ENCODE measurements at regions of chr2 and their contacts with region 1.

Region 1: GRCh38 chr2:139790807-139791752 is 1010.9 kb upstream of the NXPH2 start:
- DNase-seq: peak; percentile 69
- ATAC-seq: peak; percentile 87
- H3K4me3 ChIP-seq: no peak overlapping the region
- H3K27ac ChIP-seq: no peak overlapping the region
- H3K4me1 ChIP-seq: no peaks in the 10 kb centered on the region
- H3K27me3 ChIP-seq: no peaks in the 10 kb centered on the region
- CTCF ChIP-seq: peak; percentile 73

Region 2: DNA sequence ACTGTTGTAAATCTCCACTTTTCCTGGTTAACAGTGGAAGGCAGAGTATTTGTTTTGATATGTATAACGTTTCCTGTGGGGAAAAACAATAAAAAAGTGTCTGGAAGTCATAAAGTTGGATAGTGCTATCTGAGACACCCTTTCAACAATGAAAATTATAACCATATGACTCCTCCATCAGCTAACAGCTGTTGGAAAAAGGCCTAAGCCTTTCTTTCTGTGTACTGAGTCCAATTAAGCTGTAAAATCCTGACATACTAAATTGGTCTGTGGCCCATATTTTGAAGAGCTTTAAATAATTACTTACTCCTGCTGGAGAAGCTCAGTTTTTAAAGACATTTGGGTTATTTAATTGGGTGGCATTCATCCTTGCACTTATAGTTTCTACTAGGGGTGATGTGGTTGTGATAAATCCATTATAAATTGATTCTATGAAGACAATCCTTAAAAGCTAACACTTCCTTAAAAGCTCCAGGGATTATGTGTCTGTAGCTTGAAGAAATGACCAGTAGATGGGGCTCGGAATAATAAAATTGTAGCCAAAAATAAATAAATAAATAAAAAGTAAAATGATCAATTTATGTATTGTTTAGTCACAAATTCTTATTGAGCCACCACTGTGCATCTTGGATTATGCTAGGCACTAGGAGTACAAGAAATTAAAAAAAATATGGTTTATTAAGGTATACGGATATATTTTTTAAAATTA is 312.7 kb before region 1 on chr2:
- CTCF ChIA-PET with region 1: no interaction called
- POLR2A ChIA-PET with region 1: no interaction called
- intact Hi-C with region 1: loop called (anchors 5 kb)
- DNase-seq: peak; percentile 37
- ATAC-seq: peak; percentile 50
- H3K4me3 ChIP-seq: no peak overlapping the region
- H3K27ac ChIP-seq: no peak overlapping the region
- H3K4me1 ChIP-seq: no peaks in the 10 kb centered on the region
- H3K27me3 ChIP-seq: no peaks in the 10 kb centered on the region
- CTCF ChIP-seq: peak; percentile 58

Region 3: DNA sequence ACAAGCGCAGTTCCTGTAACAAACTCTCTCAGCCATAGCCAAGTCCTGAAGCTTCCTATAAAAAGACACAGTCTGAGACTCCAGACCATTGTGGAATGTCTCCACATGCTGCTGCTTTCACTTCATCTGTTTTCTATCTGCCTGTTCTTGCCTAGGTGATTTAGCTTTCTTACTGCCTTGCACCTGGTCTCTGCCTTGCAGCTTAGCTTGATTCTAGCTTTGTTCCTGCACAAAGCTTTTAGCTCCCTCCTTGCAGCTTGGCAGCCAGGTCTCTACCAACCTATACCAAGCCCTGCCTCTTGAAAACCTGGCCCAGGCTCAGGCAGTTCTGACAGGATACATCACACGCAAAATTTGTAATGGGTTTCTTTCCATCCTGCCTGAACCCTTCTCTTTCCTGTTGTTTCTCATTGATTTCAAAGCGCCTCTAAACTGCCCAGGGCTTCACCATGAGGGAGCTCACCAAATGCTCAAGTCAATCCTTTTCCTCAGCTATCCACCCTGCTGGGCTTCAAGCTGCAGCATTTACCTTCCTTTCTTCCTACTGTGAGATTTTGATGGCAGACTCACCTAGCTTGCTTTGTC is 69.6 kb before region 1 on chr2:
- CTCF ChIA-PET with region 1: no interaction called
- POLR2A ChIA-PET with region 1: no interaction called
- intact Hi-C with region 1: no loop called
- DNase-seq: no peak
- ATAC-seq: no peak
- H3K4me3 ChIP-seq: no peak overlapping the region
- H3K27ac ChIP-seq: no peak overlapping the region
- H3K4me1 ChIP-seq: no peaks in the 10 kb centered on the region
- H3K27me3 ChIP-seq: no peaks in the 10 kb centered on the region
- CTCF ChIP-seq: no peak

Region 4: GRCh38 chr2:139946693-139947092 is 155.6 kb after region 1 on chr2:
- CTCF ChIA-PET with region 1: no interaction called
- POLR2A ChIA-PET with region 1: no interaction called
- intact Hi-C with region 1: loop called (anchors 2 kb)
- DNase-seq: peak; percentile 18
- ATAC-seq: peak; percentile 49; the same call in 1 of the 2 replicates
- H3K4me3 ChIP-seq: no peak overlapping the region
- H3K27ac ChIP-seq: no peak overlapping the region
- H3K4me1 ChIP-seq: no peaks in the 10 kb centered on the region
- H3K27me3 ChIP-seq: no peaks in the 10 kb centered on the region
- CTCF ChIP-seq: peak; percentile 74

Region 5: DNA sequence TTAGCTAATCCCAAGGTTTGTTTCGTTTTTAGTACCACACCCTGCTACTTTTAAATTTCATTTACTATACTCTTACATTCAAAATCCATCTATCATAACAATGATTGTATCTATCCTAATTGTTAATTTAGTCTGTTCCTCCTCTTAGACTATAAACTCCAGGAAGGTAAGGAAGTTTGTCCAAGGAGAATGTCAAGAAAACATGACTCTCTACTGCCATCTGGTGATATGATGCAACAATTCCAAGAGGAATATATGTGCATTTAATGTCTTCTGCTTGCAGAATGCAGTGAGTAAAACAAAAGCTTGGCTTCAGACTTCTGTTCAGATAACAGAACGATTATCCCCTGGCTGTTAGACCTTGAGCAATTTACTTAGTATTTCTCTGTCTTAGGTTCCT is 1072.6 kb after region 1 on chr2:
- CTCF ChIA-PET with region 1: no interaction called
- POLR2A ChIA-PET with region 1: no interaction called
- intact Hi-C with region 1: loop called (anchors 1 kb)
- DNase-seq: peak; percentile 76
- ATAC-seq: peak; percentile 48
- H3K4me3 ChIP-seq: no peak overlapping the region
- H3K27ac ChIP-seq: no peak overlapping the region
- H3K4me1 ChIP-seq: no peaks in the 10 kb centered on the region
- H3K27me3 ChIP-seq: no peaks in the 10 kb centered on the region
- CTCF ChIP-seq: peak; percentile 74

Region 6: DNA sequence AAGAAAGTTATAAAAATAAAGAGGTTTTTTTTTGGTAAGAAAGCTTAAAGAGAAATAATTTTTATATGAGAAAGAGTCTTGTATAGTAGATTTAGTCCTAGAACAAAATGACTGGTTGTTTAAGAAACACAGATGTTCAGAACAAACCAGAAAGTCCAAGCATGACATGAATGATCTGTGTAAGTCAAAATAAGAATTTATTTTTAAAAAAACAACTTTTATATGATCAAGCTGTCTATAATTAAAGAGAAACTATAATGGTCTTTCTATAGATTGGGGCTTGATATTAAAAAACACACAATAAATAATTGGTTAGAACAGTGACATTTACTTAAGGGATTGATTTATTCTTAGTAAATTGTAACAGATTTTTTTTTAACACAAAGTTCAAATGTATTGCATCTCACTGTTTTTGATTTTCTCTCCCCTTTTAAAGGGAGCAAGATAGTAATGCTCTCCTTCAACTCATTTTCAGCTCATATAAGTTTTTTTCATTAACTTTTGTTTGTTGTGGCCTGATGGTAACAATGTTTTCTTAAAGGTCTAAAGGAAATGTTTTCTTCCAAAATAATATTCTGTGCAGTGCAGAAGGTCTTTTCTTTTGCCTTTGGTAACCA is 1082.9 kb after region 1 on chr2:
- CTCF ChIA-PET with region 1: no interaction called
- POLR2A ChIA-PET with region 1: no interaction called
- intact Hi-C with region 1: no loop called
- DNase-seq: no peak
- ATAC-seq: no peak
- H3K4me3 ChIP-seq: no peak overlapping the region
- H3K27ac ChIP-seq: no peak overlapping the region
- H3K4me1 ChIP-seq: no peaks in the 10 kb centered on the region
- H3K27me3 ChIP-seq: no peaks in the 10 kb centered on the region
- CTCF ChIP-seq: no peak

Measured in PC-3 (cell line).